Right ventricle myocardium superior (tissue), 1 donor: ENCODE measurements at regions of chr11 and their contacts with region 1.

Region 1: GRCh38 chr11:15208378-15209222 is 93.9 kb downstream of the INSC start:
- DNase-seq: peak; percentile 80
- ATAC-seq: peak; percentile 93

Region 2: DNA sequence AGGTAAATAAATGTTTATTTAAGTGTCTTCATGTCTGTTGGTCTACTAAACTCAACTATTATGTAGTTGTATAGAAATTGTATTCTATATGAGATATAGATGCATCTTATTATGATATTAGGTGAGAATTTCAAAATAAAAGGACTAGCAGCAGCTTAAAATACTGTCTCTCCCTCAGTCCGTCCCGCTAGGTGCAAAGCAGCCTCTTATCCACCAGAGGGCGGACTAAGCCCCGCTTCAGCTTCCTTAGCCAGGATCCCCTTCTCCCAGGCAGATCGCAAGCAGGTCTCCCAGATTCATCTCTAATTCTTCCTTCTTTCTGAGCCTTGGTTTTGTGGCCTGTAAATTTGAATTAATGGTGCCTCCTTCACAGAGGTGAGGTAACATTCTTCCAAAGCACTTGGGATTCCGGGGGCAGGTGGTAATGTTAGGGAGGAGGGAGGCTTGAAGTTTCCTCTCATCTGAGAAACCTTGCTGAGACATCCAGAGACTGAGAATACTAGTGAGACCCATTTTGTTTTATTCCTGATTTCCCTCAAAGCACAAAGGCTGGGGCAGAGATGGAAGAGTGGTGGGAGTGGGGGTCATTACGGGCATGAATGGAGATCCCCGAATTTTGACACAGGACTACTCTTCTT is 107.4 kb before region 1 on chr11:
- intact Hi-C with region 1: loop called (anchors 2 kb)
- DNase-seq: peak; percentile 59
- ATAC-seq: peak; percentile 89